Activated B cell treated with CpG ODN at 0.5 μM for 24 hours (primary cell): ENCODE measurements at regions of chr5 and their contacts with region 1.

Region 1: DNA sequence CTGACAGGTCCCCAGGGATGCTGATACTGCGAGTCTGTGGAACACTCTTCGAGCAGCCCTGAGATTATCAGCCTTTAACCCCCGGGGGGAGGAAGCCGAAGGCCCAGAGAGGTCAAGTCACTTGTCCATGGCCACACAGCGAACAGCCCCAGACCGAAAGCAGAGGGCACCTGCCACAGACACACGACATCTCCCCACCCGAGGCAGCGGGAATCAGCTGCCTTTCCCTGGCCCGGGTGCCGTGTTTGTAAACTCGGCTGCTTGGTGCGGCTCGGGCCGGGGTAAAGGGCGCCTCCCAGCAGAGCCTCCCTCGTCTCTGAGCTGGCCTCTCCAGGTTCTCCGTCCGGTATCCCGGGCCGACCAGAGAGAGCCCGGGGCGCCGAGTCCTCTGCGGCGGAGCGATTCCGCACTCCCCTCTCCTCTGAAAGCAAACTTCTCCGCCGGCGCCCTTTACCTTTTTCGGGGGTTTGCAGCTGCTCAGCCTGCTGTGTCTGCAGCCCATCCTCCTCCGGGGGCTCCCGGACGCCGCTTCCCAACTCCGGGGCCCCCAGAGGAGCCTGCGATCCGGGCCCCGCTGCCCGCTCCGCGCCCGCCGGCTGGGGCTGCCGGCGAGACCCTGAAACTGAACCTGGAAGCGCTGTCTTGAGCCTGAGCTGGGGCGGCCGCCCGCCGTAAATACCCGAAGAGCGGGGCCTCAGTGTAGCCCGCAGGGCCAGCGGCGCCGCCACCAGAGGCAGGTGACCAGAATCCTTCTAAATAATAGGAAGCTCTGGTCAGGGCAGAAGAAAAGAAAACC is at the start of gene CCDC69:
- DNase-seq: peak; percentile 56
- ATAC-seq: peak; percentile 51
- H3K4me3 Mint-ChIP-seq: peak within 1 kb of the TSS; percentile 91
- H3K27ac Mint-ChIP-seq: peak within 1 kb of the TSS; percentile 93
- H3K4me1 Mint-ChIP-seq: peaks cover 73% of the 10 kb centered on the region
- H3K27me3 Mint-ChIP-seq: no peaks in the 10 kb centered on the region
- CTCF ChIP-seq: no peak
- total RNA-seq, gene CCDC69: 98.9 and 109 TPM in 2 replicates

Region 2: DNA sequence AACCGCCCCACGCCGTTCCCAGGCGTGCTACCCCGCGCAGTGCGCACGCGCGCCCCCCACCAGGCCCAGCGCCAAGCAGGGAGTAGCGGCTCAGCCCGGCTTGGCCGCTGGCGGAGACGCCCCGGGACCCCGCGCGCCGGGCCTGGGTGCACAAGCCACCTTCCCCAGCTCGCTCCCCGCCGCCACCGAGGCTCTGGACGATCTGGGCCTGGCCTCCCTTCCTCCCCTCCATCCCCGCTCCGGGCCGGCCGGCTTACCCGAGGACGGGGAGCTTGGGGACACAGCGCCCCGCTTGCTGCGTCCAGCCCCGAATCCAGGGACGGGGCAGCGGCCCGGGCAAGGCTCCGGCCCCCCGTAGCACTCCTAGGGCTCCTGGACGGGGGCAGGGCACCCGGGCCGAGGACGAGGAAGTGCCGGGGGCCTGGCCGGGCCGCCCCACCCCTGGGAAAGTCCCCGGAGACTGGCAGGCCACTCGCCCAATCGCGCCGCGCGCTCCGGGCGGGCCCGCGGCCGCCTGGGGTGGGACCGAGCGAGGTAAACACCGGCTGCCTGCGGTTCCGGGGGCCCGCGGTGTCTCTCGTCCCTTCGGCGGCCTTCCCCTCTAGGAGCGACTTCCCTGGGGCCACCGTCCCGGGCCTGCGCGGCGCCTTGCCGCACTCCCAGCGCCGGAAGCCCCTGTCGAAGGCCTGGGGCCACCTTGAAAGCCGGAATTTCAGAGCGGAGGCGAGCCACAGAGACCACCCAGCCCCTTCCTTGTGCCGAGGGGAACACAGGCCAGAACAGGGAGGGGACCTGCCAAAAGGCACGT is 142.8 kb before region 1 on chr5 and contains the start of gene TNIP1:
- CTCF ChIA-PET with region 1: no interaction called
- POLR2A ChIA-PET with region 1: interaction called, 11 read pairs
- intact Hi-C with region 1: no loop called
- DNase-seq: peak; percentile 99
- ATAC-seq: peak; percentile 81
- H3K4me3 Mint-ChIP-seq: peak within 1 kb of the TSS; percentile 93
- H3K27ac Mint-ChIP-seq: peak within 1 kb of the TSS; percentile 94
- H3K4me1 Mint-ChIP-seq: peaks cover 88% of the 10 kb centered on the region
- H3K27me3 Mint-ChIP-seq: no peaks in the 10 kb centered on the region
- CTCF ChIP-seq: no peak
- total RNA-seq, gene TNIP1: 506 and 512 TPM in 2 replicates

Region 3: GRCh38 chr5:151107738-151108508 is 115.7 kb before region 1 on chr5:
- CTCF ChIA-PET with region 1: no interaction called
- POLR2A ChIA-PET with region 1: no interaction called
- intact Hi-C with region 1: no loop called
- DNase-seq: no peak
- ATAC-seq: no peak
- H3K4me3 Mint-ChIP-seq: no peak overlapping the region
- H3K27ac Mint-ChIP-seq: no peak overlapping the region
- H3K4me1 Mint-ChIP-seq: peaks cover 23% of the 10 kb centered on the region
- H3K27me3 Mint-ChIP-seq: no peaks in the 10 kb centered on the region
- CTCF ChIP-seq: no peak

Region 4: DNA sequence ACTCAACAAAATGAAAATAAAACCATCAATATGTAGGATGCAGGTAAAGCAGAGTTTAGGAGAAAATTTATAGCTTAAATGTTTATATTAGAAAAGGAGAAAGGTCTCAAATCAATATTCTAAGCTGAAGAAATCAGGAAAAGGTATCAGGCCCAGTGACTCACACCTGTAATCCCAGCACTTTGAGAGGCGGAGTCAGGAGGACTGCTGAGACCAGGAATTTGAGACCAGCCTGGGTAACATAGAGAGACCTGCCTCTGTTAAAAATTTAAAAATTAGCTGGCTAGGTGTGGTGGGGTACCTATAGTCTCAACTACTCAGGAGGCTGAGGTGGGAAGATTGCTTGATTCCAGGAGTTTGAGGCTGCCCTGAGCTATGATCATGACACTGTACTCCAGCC is 32.0 kb before region 1 on chr5:
- CTCF ChIA-PET with region 1: no interaction called
- POLR2A ChIA-PET with region 1: interaction called, 12 read pairs
- intact Hi-C with region 1: loop called (anchors 1 kb)
- DNase-seq: no peak
- ATAC-seq: no peak
- H3K4me3 Mint-ChIP-seq: peak overlapping the region; percentile 46
- H3K27ac Mint-ChIP-seq: peak overlapping the region; percentile 76
- H3K4me1 Mint-ChIP-seq: peaks cover 80% of the 10 kb centered on the region
- H3K27me3 Mint-ChIP-seq: no peaks in the 10 kb centered on the region
- CTCF ChIP-seq: no peak

Region 5: GRCh38 chr5:151196556-151197290 is 26.9 kb before region 1 on chr5:
- CTCF ChIA-PET with region 1: no interaction called
- POLR2A ChIA-PET with region 1: interaction called, 12 read pairs
- intact Hi-C with region 1: loop called (anchors 1 kb)
- DNase-seq: peak; percentile 31
- ATAC-seq: peak; percentile 95
- H3K4me3 Mint-ChIP-seq: peak overlapping the region; percentile 29
- H3K27ac Mint-ChIP-seq: peak overlapping the region; percentile 84
- H3K4me1 Mint-ChIP-seq: peaks cover 75% of the 10 kb centered on the region
- H3K27me3 Mint-ChIP-seq: no peaks in the 10 kb centered on the region
- CTCF ChIP-seq: no peak

Region 6: GRCh38 chr5:151202381-151203139 is 21.1 kb before region 1 on chr5:
- CTCF ChIA-PET with region 1: no interaction called
- POLR2A ChIA-PET with region 1: interaction called, 12 read pairs
- intact Hi-C with region 1: no loop called
- DNase-seq: no peak
- ATAC-seq: peak; percentile 77
- H3K4me3 Mint-ChIP-seq: peak overlapping the region; percentile 19
- H3K27ac Mint-ChIP-seq: peak overlapping the region; percentile 56
- H3K4me1 Mint-ChIP-seq: peaks cover 60% of the 10 kb centered on the region
- H3K27me3 Mint-ChIP-seq: no peaks in the 10 kb centered on the region
- CTCF ChIP-seq: no peak